Panc1 (cell line): ENCODE measurements at regions of chr2 and their contacts with region 1.

Region 1: DNA sequence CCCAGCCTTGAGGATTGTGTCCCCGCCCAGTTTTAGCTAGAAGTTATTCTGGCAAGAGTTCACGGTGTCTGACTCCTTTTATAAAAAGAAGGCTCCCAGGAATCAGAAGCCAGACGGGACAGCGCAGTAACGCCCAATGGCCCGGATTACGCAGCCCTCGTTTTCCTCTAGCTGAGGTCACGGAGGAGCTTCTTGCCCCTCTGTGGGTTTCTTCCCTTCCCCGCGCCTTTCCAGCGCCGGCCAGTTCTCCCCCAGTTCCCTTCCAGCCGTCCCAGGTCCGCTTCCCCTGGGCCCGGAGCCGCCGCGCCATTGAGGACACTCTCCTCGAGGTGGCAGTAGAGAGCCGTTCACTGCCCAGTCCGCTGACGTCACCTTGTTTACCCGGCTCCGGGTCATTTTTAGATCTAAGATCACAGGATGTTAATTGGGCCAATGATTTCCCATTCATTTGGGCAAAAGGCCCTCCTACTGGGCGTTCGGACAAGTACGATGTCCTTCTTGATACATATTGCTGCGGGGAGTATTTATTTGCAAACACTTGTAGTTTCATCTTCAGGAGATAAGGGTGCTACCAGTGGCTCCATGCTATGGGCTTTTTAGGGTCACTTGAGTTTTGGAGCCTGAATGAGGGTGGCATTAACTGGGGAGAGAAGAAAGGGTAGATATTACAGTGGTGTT is 81.5 kb upstream of the PPM1B start:
- DNase-seq: peak; percentile 56
- ATAC-seq: peak; percentile 96
- H3K4me3 ChIP-seq: peak overlapping the region; percentile 50 to 79
- H3K27ac ChIP-seq: peak overlapping the region; percentile 69
- H3K4me1 ChIP-seq: peaks cover 8% of the 10 kb centered on the region
- H3K27me3 ChIP-seq: no peaks in the 10 kb centered on the region
- CTCF ChIP-seq: peak; percentile 97

Region 2: DNA sequence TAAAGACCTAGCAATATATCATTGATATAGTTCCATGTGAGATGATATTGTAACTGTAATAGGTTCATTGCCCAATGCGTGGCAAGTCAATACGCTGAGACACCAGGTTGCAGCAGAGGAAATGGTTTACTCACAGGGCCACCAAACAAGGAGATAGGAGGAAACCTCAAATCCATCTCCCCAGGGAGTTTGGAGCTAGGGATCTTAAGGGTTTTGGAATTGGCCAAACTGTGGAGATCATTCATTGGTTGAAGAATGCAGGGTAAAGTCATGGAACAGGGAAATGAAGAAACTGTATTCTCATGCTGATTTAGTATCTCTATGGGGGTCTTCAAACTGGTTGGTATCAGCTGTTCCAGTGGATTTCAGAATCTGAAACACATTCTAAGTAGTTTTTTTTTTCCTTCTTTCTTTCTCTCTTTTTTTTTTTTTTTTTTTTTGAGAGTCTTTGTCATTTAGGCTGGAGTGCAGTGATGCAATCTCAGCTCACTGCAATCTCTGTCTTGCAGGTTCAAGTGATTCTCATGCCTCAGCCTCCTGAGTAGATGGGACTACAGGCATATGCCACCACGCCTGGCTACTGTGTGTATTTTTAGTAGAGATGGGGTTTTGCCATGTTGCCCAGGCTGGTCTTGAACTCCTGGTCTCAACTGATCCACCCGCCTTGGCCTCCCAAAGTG is 50.8 kb after region 1 on chr2:
- CTCF ChIA-PET with region 1: no interaction called
- POLR2A ChIA-PET with region 1: no interaction called
- in situ Hi-C with region 1: no loop called
- intact Hi-C with region 1: no loop called
- DNase-seq: no peak
- ATAC-seq: no peak
- H3K4me3 ChIP-seq: no peak overlapping the region
- H3K27ac ChIP-seq: no peak overlapping the region
- H3K4me1 ChIP-seq: no peaks in the 10 kb centered on the region
- H3K27me3 ChIP-seq: no peaks in the 10 kb centered on the region
- CTCF ChIP-seq: no peak

Region 3: DNA sequence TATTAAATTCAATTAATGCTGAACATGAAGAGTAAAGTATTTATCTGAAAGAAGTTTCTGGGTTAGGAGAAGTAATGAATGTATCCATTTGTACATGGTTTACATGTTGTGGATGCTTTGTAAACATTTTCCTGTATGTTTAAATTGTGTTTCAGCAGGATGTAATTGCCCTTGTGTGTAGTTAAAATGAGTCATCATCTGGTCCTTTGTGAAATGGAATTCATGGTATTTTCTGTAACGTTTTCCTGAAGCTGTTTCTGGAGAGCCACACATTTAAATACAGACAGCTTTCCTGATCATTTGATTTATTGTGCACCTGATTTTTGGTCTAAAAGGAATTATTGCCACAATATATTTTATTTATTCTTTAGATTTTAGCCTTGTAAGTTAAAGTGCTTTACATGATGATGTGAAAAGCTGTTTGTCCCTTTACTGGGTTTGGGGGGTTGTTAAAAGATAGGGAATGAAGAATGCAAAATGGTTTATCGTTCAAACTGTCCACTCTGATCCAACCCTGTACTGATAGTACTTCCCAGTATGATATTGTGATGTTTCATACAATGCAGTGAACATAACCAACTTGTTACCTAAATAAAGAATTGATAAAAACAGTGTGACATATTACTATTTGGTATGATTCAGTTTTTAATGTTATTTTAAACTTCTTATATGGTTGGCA is 146.4 kb after region 1 on chr2:
- CTCF ChIA-PET with region 1: no interaction called
- POLR2A ChIA-PET with region 1: no interaction called
- in situ Hi-C with region 1: no loop called
- intact Hi-C with region 1: loop called (anchors 5 kb)
- DNase-seq: peak; percentile 75
- ATAC-seq: peak; percentile 89
- H3K4me3 ChIP-seq: no peak overlapping the region
- H3K27ac ChIP-seq: peak overlapping the region; percentile 86
- H3K4me1 ChIP-seq: peaks cover 54% of the 10 kb centered on the region
- H3K27me3 ChIP-seq: no peaks in the 10 kb centered on the region
- CTCF ChIP-seq: no peak